ENCODE measurements at regions of chr12 and their contacts with region 1.

Region 1: GRCh38 chr12:105053116-105053572 is 31.1 kb downstream of the ALDH1L2 start:
- DNase-seq: peak; percentile 84
- ATAC-seq: peak; percentile 95
- H3K4me3 ChIP-seq: no peak overlapping the region
- H3K4me3 Mint-ChIP-seq: no peak overlapping the region
- H3K27ac ChIP-seq: no peak overlapping the region
- H3K27ac Mint-ChIP-seq: peak overlapping the region; percentile 4
- H3K4me1 ChIP-seq: peaks cover 0 to 11% of the 10 kb centered on the region in 2 donors
- H3K4me1 Mint-ChIP-seq: peaks cover 18% of the 10 kb centered on the region
- H3K27me3 ChIP-seq: no peaks in the 10 kb centered on the region
- H3K27me3 Mint-ChIP-seq: no peaks in the 10 kb centered on the region
- CTCF ChIP-seq: peak; percentile 96

Region 2: DNA sequence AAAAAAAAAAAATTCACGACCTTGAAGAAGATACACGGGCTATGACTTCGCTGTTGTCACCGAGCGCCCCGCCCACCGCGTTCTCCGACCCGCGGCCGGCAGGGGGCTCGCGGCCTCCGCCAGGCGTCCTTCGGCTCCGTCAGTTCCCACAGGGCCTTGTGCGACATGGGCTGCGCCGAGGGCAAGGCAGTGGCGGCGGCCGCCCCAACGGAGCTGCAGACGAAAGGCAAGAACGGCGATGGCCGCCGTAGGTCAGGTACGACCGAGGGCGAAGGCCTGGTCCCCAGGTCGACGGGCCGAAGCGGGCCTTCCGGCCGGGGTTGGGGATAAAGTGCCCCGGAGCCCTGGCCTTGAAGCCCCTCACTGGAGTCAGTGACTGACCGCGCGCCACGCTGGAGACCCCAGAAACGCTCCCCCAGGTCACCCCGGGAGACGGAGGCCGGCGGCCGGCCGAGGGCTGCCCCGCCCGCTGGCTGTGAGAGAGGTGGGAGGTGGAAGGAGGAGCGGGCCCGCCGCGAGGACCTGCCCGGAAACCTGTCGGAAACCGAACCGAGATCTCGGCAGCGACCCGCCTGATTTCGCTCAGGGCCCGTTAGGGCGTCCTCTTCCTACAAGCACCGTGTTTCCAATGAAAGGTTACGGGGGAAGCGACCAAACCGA is 837.4 kb before region 1 on chr12 and contains the start of gene TXNRD1:
- CTCF ChIA-PET with region 1: interaction called, 8 read pairs
- POLR2A ChIA-PET with region 1: no interaction called
- intact Hi-C with region 1: loop called (anchors 1 kb)
- DNase-seq: peak; percentile 91
- ATAC-seq: peak; percentile 99
- H3K4me3 ChIP-seq: peak within 1 kb of the TSS; percentile 44 to 71 (median 61)
- H3K4me3 Mint-ChIP-seq: peak within 1 kb of the TSS; percentile 86
- H3K27ac ChIP-seq: peak within 1 kb of the TSS in 1 of 2 donors; percentile 55
- H3K27ac Mint-ChIP-seq: peak within 1 kb of the TSS; percentile 84
- H3K4me1 ChIP-seq: peaks cover 4 to 12% of the 10 kb centered on the region in 2 donors
- H3K4me1 Mint-ChIP-seq: peaks cover 15% of the 10 kb centered on the region
- H3K27me3 ChIP-seq: peaks cover 0 to 4% (median 1%) of the 10 kb centered on the region in 4 experiments
- H3K27me3 Mint-ChIP-seq: peaks cover 15% of the 10 kb centered on the region
- CTCF ChIP-seq: peak; percentile 91
- total RNA-seq, gene TXNRD1: 44.6 and 48.1 TPM in 2 replicates

Region 3: DNA sequence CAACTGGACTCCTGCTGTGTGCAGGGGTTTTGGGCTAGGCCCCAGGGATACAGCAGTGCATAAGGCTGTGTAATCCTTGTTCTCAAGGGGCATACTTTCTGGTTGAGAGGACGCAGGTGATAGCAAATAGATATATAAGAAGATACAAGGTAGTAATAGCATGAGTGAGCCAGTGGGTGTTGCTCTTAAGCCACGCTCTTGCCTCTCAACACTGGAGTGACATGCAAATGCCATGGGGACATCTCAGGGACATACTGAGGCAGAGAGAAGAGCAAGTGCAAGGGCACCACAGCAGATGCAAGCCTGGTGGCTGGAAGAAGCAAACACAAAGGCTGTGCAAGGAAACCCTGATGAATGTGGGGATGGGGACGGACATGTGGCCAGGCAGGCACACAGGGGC is 373.1 kb before region 1 on chr12:
- CTCF ChIA-PET with region 1: interaction called, 4 read pairs
- POLR2A ChIA-PET with region 1: no interaction called
- intact Hi-C with region 1: loop called (anchors 1 kb)
- DNase-seq: peak; percentile 57
- ATAC-seq: peak; percentile 64
- H3K4me3 ChIP-seq: no peak overlapping the region
- H3K4me3 Mint-ChIP-seq: no peak overlapping the region
- H3K27ac ChIP-seq: peak overlapping the region in 1 of 2 donors; percentile 4
- H3K27ac Mint-ChIP-seq: peak overlapping the region; percentile 79
- H3K4me1 ChIP-seq: peaks cover 46 to 55% of the 10 kb centered on the region in 2 donors
- H3K4me1 Mint-ChIP-seq: peaks cover 79% of the 10 kb centered on the region
- H3K27me3 ChIP-seq: no peaks in the 10 kb centered on the region
- H3K27me3 Mint-ChIP-seq: no peaks in the 10 kb centered on the region
- CTCF ChIP-seq: peak; percentile 15

Region 4: DNA sequence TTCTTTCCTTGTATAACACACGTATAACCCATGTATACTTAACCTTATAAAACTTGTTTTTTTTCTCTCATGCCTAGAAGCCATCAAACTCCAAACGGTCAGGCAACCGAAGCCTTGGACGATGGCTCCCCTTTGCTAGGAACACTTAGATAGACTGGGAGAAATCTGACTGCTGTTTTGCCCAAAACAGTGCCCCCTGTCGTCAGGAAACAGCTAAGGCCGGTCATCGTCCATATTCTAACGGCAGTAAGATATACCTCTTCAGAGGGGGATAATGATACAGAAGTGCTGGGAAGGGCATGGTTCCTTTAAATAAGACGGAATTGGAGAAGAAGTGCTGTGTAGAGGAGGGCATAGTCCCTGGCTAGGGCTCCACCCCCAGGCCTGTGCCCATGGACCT is 225.6 kb before region 1 on chr12:
- CTCF ChIA-PET with region 1: no interaction called
- POLR2A ChIA-PET with region 1: no interaction called
- intact Hi-C with region 1: no loop called
- DNase-seq: peak; percentile 19
- ATAC-seq: no peak
- H3K4me3 ChIP-seq: no peak overlapping the region
- H3K4me3 Mint-ChIP-seq: no peak overlapping the region
- H3K27ac ChIP-seq: no peak overlapping the region
- H3K27ac Mint-ChIP-seq: no peak overlapping the region
- H3K4me1 ChIP-seq: no peaks in the 10 kb centered on the region
- H3K4me1 Mint-ChIP-seq: no peaks in the 10 kb centered on the region
- H3K27me3 ChIP-seq: no peaks in the 10 kb centered on the region
- H3K27me3 Mint-ChIP-seq: no peaks in the 10 kb centered on the region
- CTCF ChIP-seq: peak; percentile 24

Region 5: DNA sequence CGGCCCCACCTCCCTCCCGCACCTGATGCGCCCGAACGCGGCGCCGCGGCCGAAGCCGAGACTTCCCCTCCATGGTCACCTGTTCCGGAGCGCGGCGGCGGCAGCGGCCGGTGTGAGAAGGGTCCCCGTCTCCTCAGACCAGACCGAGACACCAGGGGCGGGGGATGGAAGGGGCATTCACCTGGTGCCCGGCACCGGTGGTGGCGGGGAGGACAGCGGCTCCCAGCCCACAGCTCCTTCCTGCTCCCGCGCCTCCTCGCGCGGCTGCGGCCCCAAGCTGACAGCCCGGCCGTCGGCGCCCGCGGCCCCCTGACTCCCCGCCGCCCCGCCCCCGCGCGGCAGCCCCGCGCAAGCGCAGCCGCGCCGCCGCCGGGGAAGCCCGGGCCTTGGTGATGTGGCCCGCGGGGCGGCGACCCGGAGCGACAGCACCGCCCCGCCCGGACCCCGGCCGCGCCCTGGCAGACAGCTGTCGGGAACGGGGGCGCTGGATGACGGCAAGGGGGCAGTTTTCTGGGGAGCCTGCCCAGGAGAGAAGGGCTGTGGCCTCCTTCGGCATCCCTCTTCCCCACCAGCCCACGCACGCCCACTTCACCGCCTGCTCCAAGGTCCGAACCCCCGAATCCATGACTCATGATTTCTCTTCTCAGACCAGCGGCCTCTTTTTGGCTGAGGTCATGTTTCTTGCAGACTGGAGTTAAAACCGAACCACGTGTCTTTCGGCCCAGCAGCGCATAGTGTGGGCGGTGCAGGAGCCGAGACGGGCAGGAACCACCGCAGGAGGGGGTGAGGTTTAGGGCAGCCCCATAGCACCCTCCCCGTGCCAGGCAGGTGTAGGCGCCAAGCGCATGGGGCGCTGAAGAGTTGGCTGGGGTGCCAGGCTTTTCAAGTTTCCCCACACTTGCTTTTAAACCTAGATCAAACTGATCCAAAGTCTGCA is 94.9 kb before region 1 on chr12 and contains the start of gene SLC41A2:
- CTCF ChIA-PET with region 1: interaction called, 20 read pairs
- POLR2A ChIA-PET with region 1: interaction called, 3 read pairs
- intact Hi-C with region 1: loop called (anchors 1 kb)
- DNase-seq: peak; percentile 91
- ATAC-seq: peak; percentile 84
- H3K4me3 ChIP-seq: peak within 1 kb of the TSS; percentile 57 to 80 (median 75)
- H3K4me3 Mint-ChIP-seq: peak within 1 kb of the TSS; percentile 95
- H3K27ac ChIP-seq: peak within 1 kb of the TSS; percentile 79 to 80
- H3K27ac Mint-ChIP-seq: peak within 1 kb of the TSS; percentile 93
- H3K4me1 ChIP-seq: peaks cover 13 to 16% of the 10 kb centered on the region in 2 donors
- H3K4me1 Mint-ChIP-seq: peaks cover 23% of the 10 kb centered on the region
- H3K27me3 ChIP-seq: peaks cover 0 to 2% (median 0%) of the 10 kb centered on the region in 4 experiments
- H3K27me3 Mint-ChIP-seq: peaks cover 6% of the 10 kb centered on the region
- CTCF ChIP-seq: peak; percentile 48
- total RNA-seq, gene SLC41A2: 13.0 TPM in 2 replicates

Region 6: DNA sequence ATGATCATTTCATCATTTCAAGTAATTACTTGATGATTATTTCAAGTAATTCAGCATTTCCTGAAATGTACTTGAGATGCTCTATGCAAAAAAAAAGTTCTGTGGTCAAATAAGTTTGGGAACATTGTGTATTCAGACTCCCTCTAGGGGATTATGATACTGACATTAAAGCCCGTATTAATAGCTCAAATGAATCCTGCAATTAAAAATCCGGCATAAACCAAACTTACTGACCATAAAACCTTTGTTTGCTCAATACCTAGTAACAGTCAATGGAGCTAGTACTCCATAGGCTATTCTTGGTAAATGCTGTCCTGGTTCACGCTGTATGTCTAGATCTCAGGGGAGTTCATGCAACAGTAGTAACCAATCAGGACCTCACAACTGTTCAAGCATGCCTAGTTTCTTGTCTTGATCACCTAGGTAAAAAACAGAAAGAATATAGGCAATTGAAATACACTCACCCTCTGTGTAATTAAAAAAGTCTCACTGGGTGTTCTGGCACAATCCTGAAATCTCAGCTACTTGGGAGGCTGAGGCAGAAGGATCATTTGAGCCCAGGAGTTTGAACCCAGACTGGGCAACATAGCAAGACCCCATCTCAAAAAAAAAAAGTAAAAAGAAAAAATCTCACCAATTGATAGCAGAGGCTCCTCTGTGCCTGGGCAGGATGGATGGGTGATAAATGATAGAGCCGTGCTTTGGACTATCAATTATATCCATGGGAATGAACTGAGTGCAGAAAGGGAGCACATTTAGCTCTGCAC is 17.0 kb after region 1 on chr12:
- CTCF ChIA-PET with region 1: interaction called, 14 read pairs
- POLR2A ChIA-PET with region 1: no interaction called
- intact Hi-C with region 1: no loop called
- DNase-seq: no peak
- ATAC-seq: no peak
- H3K4me3 ChIP-seq: no peak overlapping the region
- H3K4me3 Mint-ChIP-seq: no peak overlapping the region
- H3K27ac ChIP-seq: no peak overlapping the region
- H3K27ac Mint-ChIP-seq: no peak overlapping the region
- H3K4me1 ChIP-seq: peaks cover 0 to 7% of the 10 kb centered on the region in 2 donors
- H3K4me1 Mint-ChIP-seq: peaks cover 13% of the 10 kb centered on the region
- H3K27me3 ChIP-seq: peaks cover 0 to 3% (median 0%) of the 10 kb centered on the region in 4 experiments
- H3K27me3 Mint-ChIP-seq: peaks cover 8% of the 10 kb centered on the region
- CTCF ChIP-seq: no peak

Region 7: DNA sequence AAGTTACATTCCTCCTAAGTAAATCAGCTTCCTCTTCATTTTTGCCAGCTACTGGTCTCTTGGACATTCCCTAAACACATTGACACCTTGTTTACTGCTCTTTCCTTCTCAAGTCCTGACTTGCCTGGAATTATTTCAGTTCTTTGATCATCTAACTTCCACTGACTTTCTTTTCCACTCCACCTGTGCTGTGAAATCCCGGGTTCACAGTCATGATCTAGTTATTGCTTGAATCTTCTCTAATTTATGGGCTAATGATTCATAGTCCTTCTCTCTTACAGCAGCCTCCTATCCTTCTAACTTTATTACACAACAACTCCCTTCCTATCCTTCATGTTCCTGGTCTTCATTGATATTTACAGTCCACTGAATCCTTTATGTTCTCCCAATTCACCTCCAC is 537.4 kb after region 1 on chr12:
- CTCF ChIA-PET with region 1: no interaction called
- POLR2A ChIA-PET with region 1: no interaction called
- intact Hi-C with region 1: no loop called
- DNase-seq: no peak
- ATAC-seq: no peak
- H3K4me3 ChIP-seq: no peak overlapping the region
- H3K4me3 Mint-ChIP-seq: no peak overlapping the region
- H3K27ac ChIP-seq: no peak overlapping the region
- H3K27ac Mint-ChIP-seq: no peak overlapping the region
- H3K4me1 ChIP-seq: no peaks in the 10 kb centered on the region
- H3K4me1 Mint-ChIP-seq: no peaks in the 10 kb centered on the region
- H3K27me3 ChIP-seq: peaks cover 0 to 5% (median 2%) of the 10 kb centered on the region in 4 experiments
- H3K27me3 Mint-ChIP-seq: peaks cover 3% of the 10 kb centered on the region
- CTCF ChIP-seq: no peak

Measured in B cell (primary cell).